Spleen (tissue), 13 donors: ENCODE measurements at regions of chr7 and their contacts with region 1.

Region 1: GRCh38 chr7:111089822-111090426 is 1.0 kb upstream of the LRRN3 start:
- DNase-seq: no peak
- H3K4me3 ChIP-seq: no peak overlapping the region
- H3K27ac ChIP-seq: no peak overlapping the region
- H3K4me1 ChIP-seq: peaks cover 0 to 7% (median 0%) of the 10 kb centered on the region in 6 donors
- H3K27me3 ChIP-seq: no peaks in the 10 kb centered on the region
- CTCF ChIP-seq: peak; percentile 26 to 76 (median 64)
- POLR2A ChIP-seq: no peak

Region 2: GRCh38 chr7:111486472-111487142 is 396.7 kb after region 1 on chr7:
- intact Hi-C with region 1: loop called (anchors 5 kb)
- DNase-seq: no peak
- H3K4me3 ChIP-seq: no peak overlapping the region
- H3K27ac ChIP-seq: no peak overlapping the region
- H3K4me1 ChIP-seq: no peaks in the 10 kb centered on the region
- H3K27me3 ChIP-seq: no peaks in the 10 kb centered on the region
- CTCF ChIP-seq: peak; percentile 33 to 77 (median 61)
- POLR2A ChIP-seq: no peak